Vagina (tissue), 2 donors: ENCODE measurements at regions of chr18 and their contacts with region 1.

Region 1: DNA sequence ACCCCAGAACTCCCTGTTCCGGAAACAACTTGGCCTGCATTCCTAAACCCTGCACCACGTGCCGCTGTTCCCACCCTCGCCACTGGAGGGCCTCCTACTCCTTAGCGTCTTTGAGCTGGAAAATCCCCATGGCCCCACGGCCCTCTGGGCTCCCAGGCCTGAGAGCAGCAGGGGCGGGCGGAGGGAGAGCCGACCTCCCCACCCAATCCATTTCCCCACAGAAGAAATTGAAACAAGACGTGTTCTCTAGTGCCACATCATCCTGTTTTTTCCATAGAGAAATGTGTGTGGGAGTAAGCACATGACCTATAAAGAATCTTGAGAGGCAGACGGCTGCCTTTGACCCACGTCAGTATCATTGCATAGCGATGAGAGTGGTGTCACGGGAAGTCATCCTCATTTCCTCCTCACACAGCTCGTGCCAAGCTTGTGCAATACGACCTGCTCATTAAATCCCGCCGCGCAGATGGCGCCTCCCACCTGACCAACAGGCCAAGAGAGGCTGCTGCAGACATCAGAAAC is 79.2 kb downstream of the LAMA1 start:
- DNase-seq: peak in 1 of 2 donors; percentile 99
- H3K4me3 ChIP-seq: no peak overlapping the region
- H3K27ac ChIP-seq: peak overlapping the region; percentile 78
- H3K4me1 ChIP-seq: peaks cover 6% of the 10 kb centered on the region
- H3K27me3 ChIP-seq: no peaks in the 10 kb centered on the region
- CTCF ChIP-seq: peak in 1 of 3 experiments; percentile 76
- POLR2A ChIP-seq: no peak

Region 2: GRCh38 chr18:5515011-5515784 is 1523.2 kb before region 1 on chr18:
- intact Hi-C with region 1: loop called (anchors 5 kb)
- DNase-seq: no peak
- H3K4me3 ChIP-seq: no peak overlapping the region
- H3K27ac ChIP-seq: no peak overlapping the region
- H3K4me1 ChIP-seq: peaks cover 6% of the 10 kb centered on the region
- H3K27me3 ChIP-seq: no peaks in the 10 kb centered on the region
- CTCF ChIP-seq: no peak
- POLR2A ChIP-seq: no peak